ENCODE measurements at regions of chr7 and their contacts with region 1.

Region 1: GRCh38 chr7:150695654-150696053 is 10.1 kb downstream of the GIMAP2 start:
- DNase-seq: no peak
- ATAC-seq: no peak
- H3K4me3 ChIP-seq: no peak overlapping the region
- H3K4me3 Mint-ChIP-seq: no peak overlapping the region
- H3K27ac ChIP-seq: no peak overlapping the region
- H3K27ac Mint-ChIP-seq: no peak overlapping the region
- H3K4me1 ChIP-seq: peaks cover 16% of the 10 kb centered on the region
- H3K4me1 Mint-ChIP-seq: peaks cover 16% of the 10 kb centered on the region
- H3K27me3 ChIP-seq: no peaks in the 10 kb centered on the region
- H3K27me3 Mint-ChIP-seq: no peaks in the 10 kb centered on the region
- CTCF ChIP-seq: no peak

Region 2: DNA sequence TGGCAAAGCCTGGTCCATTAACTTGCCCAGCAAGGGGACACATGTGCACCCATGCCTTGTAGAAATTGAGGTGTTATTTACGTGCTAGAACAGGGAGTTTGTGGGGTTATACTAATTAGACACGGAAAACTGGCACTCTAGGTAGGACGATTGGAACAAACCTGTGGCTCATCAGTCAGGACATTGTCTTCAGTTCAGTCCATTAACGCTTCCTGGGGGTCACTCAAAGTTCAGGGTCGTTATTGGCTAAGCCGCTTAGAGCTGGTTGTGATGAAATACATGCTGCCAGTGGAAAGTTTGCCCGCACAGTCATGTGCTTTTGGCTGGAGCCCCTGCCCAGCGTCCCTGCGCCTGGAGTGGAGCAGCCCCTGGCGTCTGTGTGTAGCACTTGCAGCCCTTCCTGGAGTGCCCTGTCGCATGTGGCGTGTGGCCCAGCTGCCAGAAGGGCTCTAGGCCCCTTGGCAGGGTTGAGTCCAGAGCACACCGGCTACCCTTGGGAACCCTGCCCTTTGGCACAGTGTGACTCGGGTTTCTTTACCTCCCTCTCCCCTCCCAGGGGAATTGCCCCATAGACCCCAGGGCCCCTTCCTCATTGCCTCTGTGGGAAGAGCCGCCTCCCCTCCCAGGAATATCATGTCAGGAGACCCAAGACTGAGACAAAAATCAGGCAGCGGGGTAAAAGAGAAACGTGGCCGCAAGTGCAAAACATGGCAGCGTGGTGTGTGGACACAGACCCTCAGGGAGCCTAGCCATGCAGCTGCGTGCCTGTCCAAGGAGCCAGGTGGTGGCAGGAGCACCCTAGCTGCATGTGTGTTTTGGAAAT is 306.7 kb before region 1 on chr7:
- CTCF ChIA-PET with region 1: no interaction called
- POLR2A ChIA-PET with region 1: no interaction called
- intact Hi-C with region 1: no loop called
- DNase-seq: peak in 2 of 14 experiments; percentile 44 to 50
- ATAC-seq: no peak
- H3K4me3 ChIP-seq: no peak overlapping the region
- H3K4me3 Mint-ChIP-seq: no peak overlapping the region
- H3K27ac ChIP-seq: no peak overlapping the region
- H3K27ac Mint-ChIP-seq: no peak overlapping the region
- H3K4me1 ChIP-seq: peaks cover 3% of the 10 kb centered on the region
- H3K4me1 Mint-ChIP-seq: no peaks in the 10 kb centered on the region
- H3K27me3 ChIP-seq: no peaks in the 10 kb centered on the region
- H3K27me3 Mint-ChIP-seq: no peaks in the 10 kb centered on the region
- CTCF ChIP-seq: no peak

Region 3: DNA sequence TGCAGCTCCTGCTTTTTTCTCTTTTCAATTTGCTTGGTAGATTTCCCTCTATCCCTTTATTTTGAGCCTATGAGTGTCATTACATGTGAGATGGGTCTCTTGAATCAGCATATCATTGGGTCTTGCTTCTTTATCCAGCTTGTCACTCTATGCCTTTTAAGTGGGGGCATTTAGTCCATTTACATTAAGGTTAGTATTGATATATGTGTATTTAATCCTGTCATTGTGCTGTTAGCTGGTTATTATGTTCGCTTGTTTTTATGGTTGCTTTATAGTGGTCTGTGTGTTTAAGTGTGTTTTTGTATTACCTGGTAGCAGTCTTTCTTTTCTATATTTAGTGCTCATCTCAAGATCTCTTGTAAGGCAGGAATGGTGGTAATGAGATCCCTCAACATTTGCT is 163.9 kb before region 1 on chr7:
- CTCF ChIA-PET with region 1: interaction called, 3 read pairs
- POLR2A ChIA-PET with region 1: interaction called, 3 read pairs
- intact Hi-C with region 1: loop called in 1 of 2 experiments (anchors 5 kb)
- DNase-seq: no peak
- ATAC-seq: no peak
- H3K4me3 ChIP-seq: no peak overlapping the region
- H3K4me3 Mint-ChIP-seq: peak overlapping the region; percentile 13
- H3K27ac ChIP-seq: no peak overlapping the region
- H3K27ac Mint-ChIP-seq: no peak overlapping the region
- H3K4me1 ChIP-seq: peaks cover 13% of the 10 kb centered on the region
- H3K4me1 Mint-ChIP-seq: peaks cover 20% of the 10 kb centered on the region
- H3K27me3 ChIP-seq: no peaks in the 10 kb centered on the region
- H3K27me3 Mint-ChIP-seq: no peaks in the 10 kb centered on the region
- CTCF ChIP-seq: no peak

Region 4: GRCh38 chr7:151539088-151539671 is 843.5 kb after region 1 on chr7:
- CTCF ChIA-PET with region 1: no interaction called
- POLR2A ChIA-PET with region 1: no interaction called
- intact Hi-C with region 1: no loop called
- DNase-seq: no peak
- ATAC-seq: no peak
- H3K4me3 ChIP-seq: no peak overlapping the region
- H3K4me3 Mint-ChIP-seq: no peak overlapping the region
- H3K27ac ChIP-seq: no peak overlapping the region
- H3K27ac Mint-ChIP-seq: no peak overlapping the region
- H3K4me1 ChIP-seq: peaks cover 3% of the 10 kb centered on the region
- H3K4me1 Mint-ChIP-seq: peaks cover 10% of the 10 kb centered on the region
- H3K27me3 ChIP-seq: no peaks in the 10 kb centered on the region
- H3K27me3 Mint-ChIP-seq: peaks cover 16% of the 10 kb centered on the region
- CTCF ChIP-seq: no peak

Measured in CD4-positive, alpha-beta T cell (primary cell).